Dendritic cell treated with granulocyte-macrophage colony-stimulating factor and Interleukin-4, amounts not matched to agents 40 ng/mL and 50 ng/mL, for 4 days (primary cell): ENCODE measurements at regions of chr17 and their contacts with region 1.

Region 1: GRCh38 chr17:9575381-9576101 is at the start of gene STX8:
- H3K4me3 Mint-ChIP-seq: peak within 1 kb of the TSS; percentile 87
- H3K27ac Mint-ChIP-seq: peak within 1 kb of the TSS; percentile 79
- H3K4me1 Mint-ChIP-seq: peaks cover 25% of the 10 kb centered on the region
- H3K27me3 Mint-ChIP-seq: no peaks in the 10 kb centered on the region

Region 2: DNA sequence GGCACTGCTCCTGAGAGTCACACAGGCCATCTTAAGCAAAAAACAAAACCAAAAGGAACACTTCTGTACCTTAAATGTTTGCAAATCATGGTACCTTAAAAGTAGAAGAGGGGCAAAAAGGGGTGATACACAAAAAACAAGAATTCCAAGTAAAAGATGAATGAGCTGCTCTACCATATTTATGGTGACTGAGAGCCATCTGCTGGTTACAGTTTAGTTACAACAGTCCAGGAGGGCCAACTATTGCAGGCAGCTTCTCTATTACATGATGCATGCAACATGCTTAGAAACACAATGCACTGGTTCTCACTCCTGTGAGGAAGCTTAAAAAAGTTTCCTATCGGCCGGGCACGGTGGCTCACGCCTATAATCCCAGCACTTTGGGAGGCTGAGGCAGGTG is 53.5 kb before region 1 on chr17:
- intact Hi-C with region 1: no loop called
- H3K4me3 Mint-ChIP-seq: no peak overlapping the region
- H3K27ac Mint-ChIP-seq: no peak overlapping the region
- H3K4me1 Mint-ChIP-seq: peaks cover 19% of the 10 kb centered on the region
- H3K27me3 Mint-ChIP-seq: no peaks in the 10 kb centered on the region

Region 3: DNA sequence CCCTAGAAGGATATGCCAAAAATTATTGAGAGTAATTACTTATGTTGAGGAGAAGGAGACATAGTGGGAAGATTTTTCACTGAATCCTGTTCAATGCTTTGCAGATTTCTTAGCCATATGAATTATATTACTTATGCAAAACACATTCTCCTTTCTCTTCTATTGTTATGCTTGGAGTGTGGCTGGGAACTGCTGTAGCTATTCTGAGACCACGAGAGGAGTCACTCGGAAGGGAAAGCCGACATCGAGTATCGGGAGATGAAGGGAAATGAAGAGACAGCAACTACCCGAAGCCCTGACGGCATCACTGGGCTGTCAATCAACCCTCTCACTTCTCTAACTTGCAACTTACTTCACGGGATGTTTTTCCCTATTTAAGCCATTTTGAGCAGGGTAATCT is 39.5 kb before region 1 on chr17:
- intact Hi-C with region 1: no loop called
- H3K4me3 Mint-ChIP-seq: no peak overlapping the region
- H3K27ac Mint-ChIP-seq: no peak overlapping the region
- H3K4me1 Mint-ChIP-seq: peaks cover 5% of the 10 kb centered on the region
- H3K27me3 Mint-ChIP-seq: no peaks in the 10 kb centered on the region

Region 4: DNA sequence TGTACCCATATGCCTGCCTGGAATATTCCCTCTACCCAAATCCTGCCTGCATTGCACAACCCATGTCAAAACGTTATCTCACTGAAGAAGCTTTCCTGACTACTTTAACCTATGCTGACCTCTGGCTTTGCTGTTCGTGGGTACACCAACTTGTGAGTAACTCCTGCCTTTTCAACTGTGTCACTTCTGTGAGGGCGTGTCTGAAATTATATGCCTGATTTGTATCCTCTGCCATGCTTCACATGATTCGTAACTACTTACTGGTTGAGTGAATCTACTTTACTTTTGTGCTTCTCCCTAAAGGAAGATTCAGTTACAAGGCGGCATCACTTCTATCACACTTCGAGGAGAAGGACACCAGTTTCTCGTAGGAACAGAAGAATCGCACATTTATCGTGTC is 36.5 kb after region 1 on chr17:
- intact Hi-C with region 1: no loop called
- H3K4me3 Mint-ChIP-seq: no peak overlapping the region
- H3K27ac Mint-ChIP-seq: no peak overlapping the region
- H3K4me1 Mint-ChIP-seq: no peaks in the 10 kb centered on the region
- H3K27me3 Mint-ChIP-seq: peaks cover 8% of the 10 kb centered on the region

Region 5: GRCh38 chr17:9676742-9677387 is 101.3 kb after region 1 on chr17:
- intact Hi-C with region 1: loop called (anchors 5 kb)
- H3K4me3 Mint-ChIP-seq: no peak overlapping the region
- H3K27ac Mint-ChIP-seq: no peak overlapping the region
- H3K4me1 Mint-ChIP-seq: no peaks in the 10 kb centered on the region
- H3K27me3 Mint-ChIP-seq: no peaks in the 10 kb centered on the region

Region 6: DNA sequence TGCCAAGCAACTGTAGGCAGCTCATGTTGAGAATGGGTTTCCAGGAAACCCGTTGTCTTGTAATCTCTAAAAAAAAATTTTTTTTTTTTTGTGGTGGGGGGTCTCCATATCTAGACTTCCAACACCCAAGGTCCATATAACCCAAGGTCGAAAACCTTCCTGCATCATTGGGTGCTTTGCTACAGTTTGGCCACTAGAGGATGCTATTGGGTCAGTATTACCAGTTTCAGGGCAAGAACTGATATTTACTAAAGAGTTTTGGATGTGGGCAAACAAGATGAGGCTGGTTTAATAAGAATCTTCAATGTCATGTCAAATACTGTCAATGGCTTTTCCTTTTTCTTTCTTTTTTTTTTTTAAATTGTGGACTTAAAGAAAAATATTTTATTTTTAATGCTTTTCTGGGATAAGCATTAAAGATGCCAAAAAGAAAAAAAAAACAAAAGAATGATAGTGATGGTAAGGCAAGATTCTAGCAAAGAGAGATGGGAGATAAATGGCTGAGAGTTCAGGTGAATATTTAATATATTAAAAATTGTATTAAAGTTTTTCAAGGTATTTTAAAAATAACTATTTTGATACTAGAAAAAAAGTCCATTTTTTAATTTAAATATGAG is 153.6 kb after region 1 on chr17:
- intact Hi-C with region 1: loop called (anchors 5 kb)
- H3K4me3 Mint-ChIP-seq: no peak overlapping the region
- H3K27ac Mint-ChIP-seq: no peak overlapping the region
- H3K4me1 Mint-ChIP-seq: peaks cover 14% of the 10 kb centered on the region
- H3K27me3 Mint-ChIP-seq: no peaks in the 10 kb centered on the region

Region 7: GRCh38 chr17:9865586-9865985 is 290.0 kb after region 1 on chr17:
- intact Hi-C with region 1: no loop called
- H3K4me3 Mint-ChIP-seq: no peak overlapping the region
- H3K27ac Mint-ChIP-seq: no peak overlapping the region
- H3K4me1 Mint-ChIP-seq: no peaks in the 10 kb centered on the region
- H3K27me3 Mint-ChIP-seq: peaks cover 12% of the 10 kb centered on the region